ENCODE measurements at regions of chr17 and their contacts with region 1.

Region 1: GRCh38 chr17:53837131-53837530 is 14.4 kb downstream of the KIF2B start:
- DNase-seq: no peak
- H3K4me3 Mint-ChIP-seq: no peak overlapping the region
- H3K27ac Mint-ChIP-seq: no peak overlapping the region
- H3K4me1 Mint-ChIP-seq: peaks cover 14% of the 10 kb centered on the region
- H3K27me3 Mint-ChIP-seq: no peaks in the 10 kb centered on the region
- CTCF ChIP-seq: no peak

Region 2: DNA sequence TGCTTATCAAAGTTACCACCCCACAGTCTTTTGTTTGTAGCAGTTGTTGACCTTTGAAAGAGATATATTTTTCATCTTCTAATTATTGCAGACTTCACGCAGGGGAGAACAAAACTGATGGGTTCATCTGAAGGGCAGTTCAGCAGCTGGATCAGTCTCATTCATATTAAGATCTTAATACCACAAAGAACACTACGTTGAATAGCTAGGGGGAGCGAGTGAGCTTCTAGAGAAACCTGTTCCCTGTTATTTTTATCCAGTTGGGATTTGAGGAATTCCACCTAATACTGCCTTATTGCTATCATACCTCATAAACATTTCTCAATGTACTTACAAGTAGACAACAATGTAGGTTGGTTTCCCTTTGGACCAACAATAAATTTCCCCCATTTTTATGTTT is 320.5 kb before region 1 on chr17:
- CTCF ChIA-PET with region 1: no interaction called
- intact Hi-C with region 1: loop called (anchors 5 kb)
- DNase-seq: peak; percentile 0
- H3K4me3 Mint-ChIP-seq: no peak overlapping the region
- H3K27ac Mint-ChIP-seq: no peak overlapping the region
- H3K4me1 Mint-ChIP-seq: no peaks in the 10 kb centered on the region
- H3K27me3 Mint-ChIP-seq: no peaks in the 10 kb centered on the region
- CTCF ChIP-seq: no peak

Region 3: GRCh38 chr17:53626286-53626685 is 210.8 kb before region 1 on chr17:
- CTCF ChIA-PET with region 1: no interaction called
- intact Hi-C with region 1: no loop called
- DNase-seq: no peak
- H3K4me3 Mint-ChIP-seq: no peak overlapping the region
- H3K27ac Mint-ChIP-seq: no peak overlapping the region
- H3K4me1 Mint-ChIP-seq: no peaks in the 10 kb centered on the region
- H3K27me3 Mint-ChIP-seq: no peaks in the 10 kb centered on the region
- CTCF ChIP-seq: no peak

Region 4: GRCh38 chr17:53819956-53820355 is 17.2 kb before region 1 on chr17:
- CTCF ChIA-PET with region 1: interaction called, 15 read pairs
- intact Hi-C with region 1: no loop called
- DNase-seq: no peak
- H3K4me3 Mint-ChIP-seq: no peak overlapping the region
- H3K27ac Mint-ChIP-seq: no peak overlapping the region
- H3K4me1 Mint-ChIP-seq: no peaks in the 10 kb centered on the region
- H3K27me3 Mint-ChIP-seq: no peaks in the 10 kb centered on the region
- CTCF ChIP-seq: no peak